Cardiac septum (tissue), 1 donor: ENCODE measurements at regions of chr6 and their contacts with region 1.

Region 1: DNA sequence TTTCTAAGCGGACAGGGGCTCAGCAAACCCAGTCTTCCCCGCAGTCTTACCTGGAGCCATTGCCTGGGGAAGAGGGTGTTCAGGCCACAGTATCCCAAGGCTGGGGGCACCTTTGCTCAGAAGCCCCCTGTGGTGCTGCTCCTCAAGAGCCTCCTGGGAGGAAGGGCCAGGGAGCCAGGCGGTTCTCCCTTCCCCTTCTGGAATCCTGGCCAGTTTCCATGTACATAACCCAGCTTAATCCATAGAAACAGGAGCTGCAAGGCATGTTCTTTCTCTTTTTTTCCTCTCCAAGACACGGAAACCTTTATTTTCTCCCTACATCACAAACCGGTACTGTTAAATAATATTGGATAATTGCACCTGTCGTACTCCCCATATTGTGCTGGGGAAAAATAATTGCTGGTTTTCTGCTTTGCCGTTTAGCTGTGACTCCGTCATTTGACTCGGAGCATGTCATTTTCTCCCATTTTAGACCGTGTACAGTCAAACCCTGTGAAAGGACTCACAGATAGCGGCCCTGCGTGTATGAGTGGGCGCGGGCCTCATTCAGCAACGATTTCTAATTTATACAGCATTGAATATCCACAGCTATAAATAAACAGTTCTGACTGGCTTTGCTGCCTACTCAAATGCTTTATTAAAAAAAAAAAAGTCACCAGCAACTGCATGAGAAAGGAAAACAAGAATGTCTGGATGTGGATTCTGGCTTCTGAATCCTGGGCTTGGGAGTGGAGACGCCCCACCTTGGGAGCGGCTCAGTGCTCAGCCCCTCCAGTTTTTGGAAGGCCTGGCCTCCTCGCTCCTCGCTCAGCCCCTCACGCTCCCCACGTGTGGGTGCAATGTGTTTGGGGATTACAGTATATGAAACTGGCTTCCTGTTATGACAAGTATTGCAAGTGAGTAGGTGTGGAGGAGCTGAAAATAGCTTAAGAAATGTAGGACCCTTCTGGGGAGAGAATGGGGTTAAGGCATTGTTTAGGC is 67.3 kb downstream of the ADTRP start:
- DNase-seq: no peak

Region 2: DNA sequence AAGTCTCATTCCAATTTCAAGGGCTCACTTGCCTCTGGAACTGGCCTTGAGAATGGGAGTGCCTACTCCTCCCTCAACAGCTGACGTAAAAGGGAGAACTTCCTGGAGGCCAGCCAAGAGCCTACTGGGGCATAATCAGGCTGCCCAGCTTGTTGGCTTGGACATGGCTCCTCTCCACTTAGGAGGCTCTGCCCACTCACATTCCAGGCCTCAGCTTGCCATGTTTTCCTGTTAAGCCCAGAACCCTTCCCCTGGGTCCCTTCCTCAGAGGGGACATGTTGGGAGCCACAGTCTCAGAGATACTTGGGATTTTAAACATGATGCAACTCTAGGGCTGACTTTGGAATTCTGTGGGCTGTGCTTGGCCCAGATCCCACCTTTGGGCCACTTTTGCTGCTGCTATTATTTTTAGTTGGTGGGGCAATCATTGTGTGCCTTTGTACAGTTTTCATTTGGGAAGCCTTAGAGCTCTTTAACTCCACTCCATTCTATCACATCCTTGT is 98.8 kb after region 1 on chr6:
- intact Hi-C with region 1: loop called (anchors 5 kb)
- DNase-seq: peak; percentile 87